ENCODE measurements at regions of chr16 and their contacts with region 1.

Region 1: GRCh38 chr16:31440516-31441184 is 1.9 kb downstream of the ZNF843 start:
- DNase-seq: no peak
- H3K4me3 ChIP-seq: no peak overlapping the region
- H3K27ac ChIP-seq: no peak overlapping the region
- H3K4me1 ChIP-seq: peaks cover 4% of the 10 kb centered on the region
- H3K27me3 ChIP-seq: no peaks in the 10 kb centered on the region
- CTCF ChIP-seq: no peak

Region 2: GRCh38 chr16:30997000-30997886 is 443.4 kb before region 1 on chr16:
- CTCF ChIA-PET with region 1: no interaction called
- dilution Hi-C with region 1: no loop called
- in situ Hi-C with region 1: loop called (anchors 5 to 25 kb)
- intact Hi-C with region 1: loop called (anchors 2 kb)
- DNase-seq: peak; percentile 72
- H3K4me3 ChIP-seq: peak overlapping the region; percentile 51 to 68 (median 60)
- H3K27ac ChIP-seq: peak overlapping the region; percentile 85
- H3K4me1 ChIP-seq: peaks cover 36% of the 10 kb centered on the region
- H3K27me3 ChIP-seq: no peaks in the 10 kb centered on the region
- CTCF ChIP-seq: no peak

Region 3: DNA sequence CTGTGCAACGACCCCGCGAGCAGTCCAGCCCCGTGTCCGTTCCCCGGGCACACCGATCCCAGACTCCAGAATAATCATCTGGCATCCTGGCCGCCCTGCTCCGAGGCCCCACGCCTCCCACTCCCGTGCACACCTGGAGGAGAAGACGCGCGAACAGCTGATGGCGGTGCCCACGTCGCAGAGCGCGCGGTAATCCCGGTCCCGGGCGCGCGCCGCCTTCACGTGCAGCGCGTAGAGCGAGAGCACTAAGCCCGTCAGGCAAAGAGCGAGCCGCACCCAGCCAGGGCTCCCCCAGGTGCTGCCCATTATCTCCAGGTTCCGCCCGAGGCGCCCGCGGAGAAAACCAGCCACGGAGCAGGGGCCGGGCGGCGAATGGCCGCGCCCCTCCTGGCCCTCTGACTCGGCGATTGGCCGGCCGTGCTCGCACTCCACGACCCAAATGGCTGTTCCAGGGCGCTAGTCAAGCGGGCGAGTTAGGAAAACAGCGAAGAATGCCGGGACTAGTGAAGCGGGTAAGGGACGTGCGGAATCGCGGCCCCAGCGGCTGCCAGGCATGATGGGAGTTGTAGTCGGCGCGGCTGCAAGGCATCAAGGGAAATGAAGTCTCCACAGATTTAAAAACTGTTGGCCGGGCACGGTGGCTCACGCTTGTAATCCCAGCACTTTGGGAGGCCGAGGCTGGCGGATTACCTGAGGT is 346.1 kb before region 1 on chr16 and contains the start of gene VKORC1:
- CTCF ChIA-PET with region 1: no interaction called
- dilution Hi-C with region 1: no loop called
- in situ Hi-C with region 1: no loop called
- intact Hi-C with region 1: loop called (anchors 5 kb)
- DNase-seq: peak; percentile 99
- H3K4me3 ChIP-seq: peak within 1 kb of the TSS; percentile 57 to 98 (median 71)
- H3K27ac ChIP-seq: peak within 1 kb of the TSS; percentile 81
- H3K4me1 ChIP-seq: peaks cover 4% of the 10 kb centered on the region
- H3K27me3 ChIP-seq: no peaks in the 10 kb centered on the region
- CTCF ChIP-seq: no peak
- total RNA-seq, gene VKORC1: 45.7 to 65.0 TPM

Region 4: DNA sequence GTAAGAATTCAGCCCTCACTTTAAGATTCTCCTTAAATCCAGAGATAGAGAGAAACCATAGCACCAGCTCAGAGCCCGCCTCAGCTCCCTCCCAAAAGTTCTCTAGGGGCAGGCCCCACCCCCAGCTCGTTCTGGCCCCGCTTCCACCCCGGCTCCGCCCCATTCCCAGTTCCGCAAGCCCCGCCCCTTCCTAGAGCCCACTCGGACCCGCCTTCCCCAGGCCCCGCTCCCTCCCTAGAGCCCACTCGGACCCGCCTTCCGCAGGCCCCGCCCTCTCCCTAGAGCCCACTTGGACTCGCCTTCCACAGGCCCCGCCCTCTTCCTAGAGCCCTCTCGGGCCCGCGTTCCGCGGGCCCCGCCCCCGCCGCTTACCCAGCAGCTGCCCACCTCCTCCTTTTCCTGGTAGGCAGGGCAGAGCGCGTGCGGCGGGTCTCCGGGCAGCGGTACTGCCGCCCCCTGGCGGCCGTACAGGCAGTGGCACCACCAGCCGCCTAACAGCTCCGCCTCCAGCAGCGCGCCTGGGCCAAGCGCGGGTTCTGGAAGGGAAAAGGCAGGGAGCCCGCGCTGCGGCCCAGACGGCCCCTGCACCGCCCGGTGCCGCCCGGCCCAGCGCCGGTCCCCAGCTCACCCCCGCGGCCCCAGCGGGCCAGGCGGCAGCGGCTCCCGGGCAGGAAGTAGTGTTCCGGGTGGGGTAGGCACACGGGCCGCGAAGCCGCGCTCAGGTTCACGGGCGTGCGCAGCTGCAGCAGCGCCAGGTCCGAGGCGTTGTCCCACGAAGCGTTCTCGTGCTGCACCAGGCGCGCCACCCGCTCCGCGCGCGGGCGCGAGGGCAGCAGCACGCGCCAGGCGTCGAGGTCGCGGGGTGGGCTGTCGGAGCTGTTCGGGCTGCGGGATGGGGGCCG is 298.3 kb before region 1 on chr16:
- CTCF ChIA-PET with region 1: no interaction called
- dilution Hi-C with region 1: no loop called
- in situ Hi-C with region 1: no loop called
- intact Hi-C with region 1: loop called (anchors 5 kb)
- DNase-seq: peak; percentile 98
- H3K4me3 ChIP-seq: peak overlapping the region; percentile 15 to 40 (median 37)
- H3K27ac ChIP-seq: peak overlapping the region; percentile 55
- H3K4me1 ChIP-seq: peaks cover 38% of the 10 kb centered on the region
- H3K27me3 ChIP-seq: no peaks in the 10 kb centered on the region
- CTCF ChIP-seq: peak; percentile 78 to 96

Region 5: DNA sequence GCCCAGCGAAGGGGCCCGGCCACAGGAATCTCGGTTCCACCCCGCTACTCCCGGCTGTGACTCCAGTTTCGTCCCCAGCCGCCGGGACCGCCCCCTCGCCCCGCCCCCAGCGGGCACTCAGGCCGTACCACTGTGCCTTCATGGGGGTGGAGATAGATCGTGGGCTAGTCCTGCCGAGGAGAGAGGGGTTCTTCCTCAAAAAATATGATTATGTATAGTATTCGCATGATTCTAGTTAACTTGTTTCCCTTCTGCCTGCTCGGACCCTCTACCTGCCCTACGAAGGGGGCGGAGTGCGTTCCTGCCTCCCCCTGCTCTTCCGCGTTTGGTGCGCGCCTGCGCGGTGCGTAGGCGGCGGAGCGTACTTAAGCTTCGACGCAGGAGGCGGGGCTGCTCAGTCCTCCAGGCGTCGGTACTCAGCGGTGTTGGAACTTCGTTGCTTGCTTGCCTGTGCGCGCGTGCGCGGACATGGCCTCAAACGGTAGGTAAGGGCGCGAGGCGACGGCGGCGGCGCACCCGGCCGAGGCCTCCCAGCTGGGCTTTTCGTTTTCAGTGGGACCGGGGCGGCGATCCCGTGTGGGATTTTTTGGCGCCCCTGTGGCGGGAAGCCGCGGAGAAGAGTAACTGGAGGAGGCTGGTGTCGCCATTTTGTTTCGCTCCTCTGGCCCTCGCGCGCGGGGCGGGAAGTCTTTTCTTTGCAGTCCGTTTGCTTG is 260.7 kb before region 1 on chr16 and contains the start of gene FUS:
- CTCF ChIA-PET with region 1: no interaction called
- dilution Hi-C with region 1: no loop called
- in situ Hi-C with region 1: no loop called
- intact Hi-C with region 1: loop called (anchors 5 kb)
- DNase-seq: peak; percentile 79
- H3K4me3 ChIP-seq: peak within 1 kb of the TSS; percentile 62 to 95 (median 75)
- H3K27ac ChIP-seq: peak within 1 kb of the TSS; percentile 95
- H3K4me1 ChIP-seq: peaks cover 27% of the 10 kb centered on the region
- H3K27me3 ChIP-seq: no peaks in the 10 kb centered on the region
- CTCF ChIP-seq: no peak
- total RNA-seq, gene FUS: 19.5 to 404 TPM

Region 6: DNA sequence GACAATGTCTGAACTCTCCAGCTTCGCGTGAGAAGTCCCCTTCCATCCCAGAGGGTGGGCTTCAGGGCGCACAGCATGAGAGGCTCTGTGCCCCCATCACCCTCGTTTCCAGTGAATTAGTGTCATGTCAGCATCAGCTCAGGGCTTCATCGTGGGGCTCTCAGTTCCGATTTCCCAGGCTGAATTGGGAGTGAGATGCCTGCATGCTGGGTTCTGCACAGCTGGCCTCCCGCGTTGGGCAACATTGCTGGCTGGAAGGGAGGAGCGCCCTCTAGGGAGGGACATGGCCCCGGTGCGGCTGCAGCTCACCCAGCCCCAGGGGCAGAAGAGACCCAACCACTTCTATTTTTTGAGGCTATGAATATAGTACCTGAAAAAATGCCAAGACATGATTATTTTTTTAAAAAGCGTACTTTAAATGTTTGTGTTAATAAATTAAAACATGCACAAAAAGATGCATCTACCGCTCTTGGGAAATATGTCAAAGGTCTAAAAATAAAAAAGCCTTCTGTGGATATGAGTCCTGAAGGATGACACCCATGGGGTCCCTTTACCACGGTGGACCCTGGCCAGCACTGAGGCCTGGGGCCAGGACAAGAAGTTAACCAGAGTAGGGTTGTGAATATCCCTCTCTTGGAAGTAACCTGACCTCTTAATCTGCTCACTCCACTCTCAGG is 58.0 kb before region 1 on chr16:
- CTCF ChIA-PET with region 1: no interaction called
- dilution Hi-C with region 1: no loop called
- in situ Hi-C with region 1: no loop called
- intact Hi-C with region 1: loop called (anchors 2 kb)
- DNase-seq: peak; percentile 31
- H3K4me3 ChIP-seq: no peak overlapping the region
- H3K27ac ChIP-seq: no peak overlapping the region
- H3K4me1 ChIP-seq: peaks cover 19% of the 10 kb centered on the region
- H3K27me3 ChIP-seq: no peaks in the 10 kb centered on the region
- CTCF ChIP-seq: peak; percentile 70 to 93

Measured in mammary epithelial cell (primary cell).